H1 (cell line): ENCODE measurements at regions of chr17 and their contacts with region 1.

Region 1: GRCh38 chr17:44979426-44979995 is 11.4 kb upstream of the C1QL1 start:
- DNase-seq: no peak
- H3K4me3 ChIP-seq: no peak overlapping the region
- H3K27ac ChIP-seq: no peak overlapping the region
- H3K4me1 ChIP-seq: peaks cover 0 to 11% (median 6%) of the 10 kb centered on the region in 4 experiments; a peak in 5 of 7 replicates
- H3K27me3 ChIP-seq: no peaks in the 10 kb centered on the region; a peak in 1 of 7 replicates
- CTCF ChIP-seq: no peak
- EP300 ChIP-seq: no peak
- POLR2A ChIP-seq: no peak
- RAD21 ChIP-seq: no peak

Region 2: GRCh38 chr17:44947461-44948314 is 31.8 kb before region 1 on chr17 and contains the start of gene KIF18B:
- CTCF ChIA-PET with region 1: no interaction called
- POLR2A ChIA-PET with region 1: no interaction called
- DNase-seq: peak; percentile 69 to 93
- H3K4me3 ChIP-seq: peak within 1 kb of the TSS; percentile 82 to 100 (median 98)
- H3K27ac ChIP-seq: peak within 1 kb of the TSS; percentile 53; the same call in 1 of the 2 replicates
- H3K4me1 ChIP-seq: no peaks in the 10 kb centered on the region; a peak in 1 of 7 replicates
- H3K27me3 ChIP-seq: peaks cover 0 to 4% (median 0%) of the 10 kb centered on the region in 4 experiments; a peak in 1 of 7 replicates
- CTCF ChIP-seq: 0 out of 4 replicates have a peak, but pooled peaks of 1 of the 3 experiments have one; percentile 6
- EP300 ChIP-seq: no peak
- POLR2A ChIP-seq: peak; percentile 82 to 83
- RAD21 ChIP-seq: no peak
- total RNA-seq, gene KIF18B: 58.1 and 59.4 TPM in 2 replicates

Region 3: GRCh38 chr17:44997733-44998520 is 18.4 kb after region 1 on chr17:
- CTCF ChIA-PET with region 1: interaction called, 15 read pairs
- POLR2A ChIA-PET with region 1: no interaction called
- DNase-seq: no peak
- H3K4me3 ChIP-seq: no peak overlapping the region
- H3K27ac ChIP-seq: no peak overlapping the region
- H3K4me1 ChIP-seq: peaks cover 0 to 3% (median 0%) of the 10 kb centered on the region in 4 experiments; a peak in 1 of 7 replicates
- H3K27me3 ChIP-seq: peaks cover 0 to 4% (median under 1%) of the 10 kb centered on the region in 4 experiments; a peak in 2 of 7 replicates
- CTCF ChIP-seq: no peak
- EP300 ChIP-seq: no peak
- POLR2A ChIP-seq: no peak
- RAD21 ChIP-seq: no peak

Region 4: GRCh38 chr17:45051060-45051719 is 71.7 kb after region 1 on chr17 and contains the start of gene DCAKD:
- CTCF ChIA-PET with region 1: no interaction called
- POLR2A ChIA-PET with region 1: no interaction called
- DNase-seq: peak; percentile 79 to 89
- H3K4me3 ChIP-seq: peak within 1 kb of the TSS; percentile 75 to 84 (median 79)
- H3K27ac ChIP-seq: peak within 1 kb of the TSS; percentile 79
- H3K4me1 ChIP-seq: peaks cover 0 to 4% (median 2%) of the 10 kb centered on the region in 4 experiments; a peak in 3 of 7 replicates
- H3K27me3 ChIP-seq: no peaks in the 10 kb centered on the region; a peak in 1 of 7 replicates
- CTCF ChIP-seq: 0 out of 4 replicates have a peak, but pooled peaks of 1 of the 3 experiments have one; percentile 6
- EP300 ChIP-seq: no peak
- POLR2A ChIP-seq: peak in 1 of 2 experiments; percentile 67; a peak in 1 of 3 replicates
- RAD21 ChIP-seq: no peak; a peak in 1 of 4 replicates
- total RNA-seq, gene DCAKD: 33.7 and 35.6 TPM in 2 replicates